Panc1 (cell line): ENCODE measurements at regions of chr19 and their contacts with region 1.

Region 1: GRCh38 chr19:38564981-38565690 is 52.6 kb downstream of the MAP4K1 start:
- DNase-seq: no peak
- ATAC-seq: peak; percentile 83
- H3K4me3 ChIP-seq: peak overlapping the region; percentile 30 to 43
- H3K27ac ChIP-seq: peak overlapping the region; percentile 32
- H3K4me1 ChIP-seq: peaks cover 7% of the 10 kb centered on the region; the same call in 1 of the 2 replicates
- H3K27me3 ChIP-seq: no peaks in the 10 kb centered on the region
- CTCF ChIP-seq: no peak

Region 2: DNA sequence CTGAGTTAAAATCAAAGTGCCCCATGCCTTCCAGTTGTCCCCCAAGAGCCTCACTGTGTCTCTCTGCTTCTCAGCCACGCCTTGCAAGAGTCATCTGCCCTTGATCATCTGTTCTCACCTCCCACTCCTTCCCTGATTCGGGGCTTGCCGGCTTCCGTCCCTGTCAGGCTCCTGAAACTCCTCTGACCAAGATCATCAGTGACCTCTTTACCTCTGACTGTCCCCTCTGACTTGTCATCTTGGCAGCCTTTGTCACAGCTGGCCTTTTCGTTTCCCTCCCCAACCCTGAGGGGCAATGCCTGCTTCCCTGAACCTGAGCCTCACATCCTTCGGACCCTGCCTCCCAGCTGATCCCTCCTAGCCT is 13.7 kb before region 1 on chr19:
- CTCF ChIA-PET with region 1: interaction called, 5 read pairs
- POLR2A ChIA-PET with region 1: interaction called, 12 read pairs
- in situ Hi-C with region 1: no loop called
- intact Hi-C with region 1: no loop called
- DNase-seq: no peak
- ATAC-seq: peak; percentile 6; the same call in 1 of the 2 replicates
- H3K4me3 ChIP-seq: no peak overlapping the region
- H3K27ac ChIP-seq: no peak overlapping the region
- H3K4me1 ChIP-seq: peaks cover 4% of the 10 kb centered on the region; the same call in 1 of the 2 replicates
- H3K27me3 ChIP-seq: peaks cover 6% of the 10 kb centered on the region; the same call in 1 of the 2 replicates
- CTCF ChIP-seq: no peak

Region 3: DNA sequence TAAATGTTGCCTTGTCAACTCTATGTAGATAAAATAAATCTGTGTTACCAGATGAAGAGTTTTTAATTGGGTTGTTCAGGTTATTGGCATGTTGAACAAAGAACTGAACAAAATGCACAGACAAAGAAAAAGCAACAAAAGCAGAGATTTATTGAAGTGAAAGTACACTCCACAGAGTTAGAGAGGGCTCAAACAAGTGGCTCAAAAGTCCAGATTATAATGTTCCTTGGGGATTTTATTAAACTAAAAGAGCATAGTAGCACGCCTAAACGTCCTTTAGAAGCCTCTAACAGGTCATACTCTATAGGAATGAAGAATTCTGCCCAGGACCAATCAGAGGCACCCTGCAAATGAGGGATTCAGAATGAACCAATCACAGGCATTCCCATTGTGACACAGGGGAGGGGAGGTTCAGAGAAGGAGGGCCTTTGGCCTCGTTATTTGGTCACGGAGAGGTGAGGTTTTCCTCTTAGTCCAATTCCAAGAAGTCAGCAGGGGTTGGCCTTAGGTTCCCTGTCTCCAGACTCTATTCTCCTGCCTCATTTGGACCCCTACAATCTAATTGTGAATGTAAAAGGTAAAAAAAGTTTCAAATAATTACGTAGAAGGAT is 1418.7 kb after region 1 on chr19:
- CTCF ChIA-PET with region 1: no interaction called
- POLR2A ChIA-PET with region 1: interaction called, 10 read pairs
- in situ Hi-C with region 1: no loop called
- intact Hi-C with region 1: no loop called
- DNase-seq: no peak
- ATAC-seq: peak; percentile 20
- H3K4me3 ChIP-seq: no peak overlapping the region
- H3K27ac ChIP-seq: no peak overlapping the region
- H3K4me1 ChIP-seq: no peaks in the 10 kb centered on the region
- H3K27me3 ChIP-seq: no peaks in the 10 kb centered on the region
- CTCF ChIP-seq: no peak